IMR-90 (cell line): ENCODE measurements at regions of chr20 and their contacts with region 1.

Region 1: DNA sequence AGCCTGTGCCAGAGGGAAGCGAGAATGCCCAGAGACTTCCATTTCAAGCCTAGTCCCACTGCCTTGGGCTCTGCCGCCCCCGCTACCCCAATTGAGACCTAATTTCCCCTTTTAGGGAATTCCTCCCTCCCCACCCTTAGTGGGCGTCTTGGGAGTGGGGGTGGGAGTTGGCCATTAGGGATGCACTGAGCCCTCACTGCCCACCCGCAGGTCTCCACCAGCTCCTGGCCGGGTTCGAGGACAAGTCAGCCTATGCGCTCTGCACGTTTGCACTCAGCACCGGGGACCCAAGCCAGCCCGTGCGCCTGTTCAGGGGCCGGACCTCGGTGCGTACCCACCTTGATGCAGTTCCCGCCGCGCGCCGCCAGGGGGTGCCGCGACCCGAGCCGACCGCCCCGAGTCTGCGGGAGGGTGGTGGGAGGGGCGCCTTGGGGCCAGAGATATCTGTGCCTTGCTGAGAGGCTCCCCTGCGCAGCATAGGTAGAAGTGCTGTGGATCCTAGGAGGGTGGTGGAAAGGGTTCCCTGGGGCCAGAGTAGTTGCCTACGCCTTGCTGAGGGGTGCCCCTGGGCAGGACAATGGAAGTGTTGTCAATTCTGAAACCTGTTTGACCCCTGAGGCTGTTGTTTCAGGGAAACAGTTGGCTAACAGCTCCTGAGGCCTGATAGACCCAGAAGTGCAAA is 9.2 kb downstream of the ITPA start:
- DNase-seq: no peak
- ATAC-seq: peak; percentile 98
- H3K4me3 ChIP-seq: no peak overlapping the region
- H3K27ac ChIP-seq: no peak overlapping the region
- H3K4me1 ChIP-seq: no peaks in the 10 kb centered on the region
- H3K27me3 ChIP-seq: no peaks in the 10 kb centered on the region
- CTCF ChIP-seq: peak; percentile 68
- POLR2A ChIP-seq: no peak
- RAD21 ChIP-seq: peak; percentile 59

Region 2: GRCh38 chr20:3276680-3277015 is 58.2 kb after region 1 on chr20:
- CTCF ChIA-PET with region 1: no interaction called
- POLR2A ChIA-PET with region 1: no interaction called
- dilution Hi-C with region 1: no loop called
- in situ Hi-C with region 1: no loop called
- intact Hi-C with region 1: loop called (anchors 1 kb)
- DNase-seq: peak; percentile 22
- ATAC-seq: peak; percentile 61; the same call in 1 of the 2 replicates
- H3K4me3 ChIP-seq: no peak overlapping the region
- H3K27ac ChIP-seq: no peak overlapping the region
- H3K4me1 ChIP-seq: no peaks in the 10 kb centered on the region
- H3K27me3 ChIP-seq: no peaks in the 10 kb centered on the region
- CTCF ChIP-seq: peak; percentile 30
- POLR2A ChIP-seq: no peak
- RAD21 ChIP-seq: peak; percentile 38

Region 3: GRCh38 chr20:3312940-3313682 is 94.7 kb after region 1 on chr20:
- CTCF ChIA-PET with region 1: interaction called, 3 read pairs
- POLR2A ChIA-PET with region 1: no interaction called
- dilution Hi-C with region 1: no loop called
- in situ Hi-C with region 1: no loop called
- intact Hi-C with region 1: loop called (anchors 2 kb)
- DNase-seq: peak; percentile 53
- ATAC-seq: peak; percentile 70
- H3K4me3 ChIP-seq: no peak overlapping the region
- H3K27ac ChIP-seq: peak overlapping the region; percentile 74; the same call in 1 of the 2 replicates
- H3K4me1 ChIP-seq: peaks cover 10% of the 10 kb centered on the region
- H3K27me3 ChIP-seq: no peaks in the 10 kb centered on the region
- CTCF ChIP-seq: no peak
- POLR2A ChIP-seq: no peak
- RAD21 ChIP-seq: no peak

Region 4: GRCh38 chr20:3470627-3471396 is 252.4 kb after region 1 on chr20 and contains the start of gene ATRN:
- CTCF ChIA-PET with region 1: no interaction called
- POLR2A ChIA-PET with region 1: no interaction called
- dilution Hi-C with region 1: no loop called
- in situ Hi-C with region 1: no loop called
- intact Hi-C with region 1: loop called (anchors 10 kb)
- DNase-seq: peak; percentile 89
- ATAC-seq: peak; percentile 96
- H3K4me3 ChIP-seq: peak within 1 kb of the TSS; percentile 90
- H3K27ac ChIP-seq: peak within 1 kb of the TSS; percentile 98
- H3K4me1 ChIP-seq: peaks cover 5% of the 10 kb centered on the region
- H3K27me3 ChIP-seq: peaks cover 7% of the 10 kb centered on the region; the same call in 1 of the 2 replicates
- CTCF ChIP-seq: no peak
- POLR2A ChIP-seq: peak; percentile 89
- RAD21 ChIP-seq: 0 out of 2 replicates have a peak, but pooled peaks have one; percentile 4
- total RNA-seq, gene ATRN: 42.5 and 46.2 TPM in 2 replicates